AG04450 (cell line): ENCODE measurements at regions of chr6 and their contacts with region 1.

Region 1: GRCh38 chr6:13391537-13391936 is 63.2 kb upstream of the TBC1D7 start:
- DNase-seq: no peak
- H3K4me3 ChIP-seq: no peak overlapping the region
- H3K27ac ChIP-seq: no peak overlapping the region
- H3K27me3 ChIP-seq: no peaks in the 10 kb centered on the region
- CTCF ChIP-seq: no peak

Region 2: GRCh38 chr6:13079096-13079723 is 312.3 kb before region 1 on chr6:
- CTCF ChIA-PET with region 1: no interaction called
- POLR2A ChIA-PET with region 1: no interaction called
- DNase-seq: no peak
- H3K4me3 ChIP-seq: no peak overlapping the region
- H3K27ac ChIP-seq: no peak overlapping the region
- H3K27me3 ChIP-seq: no peaks in the 10 kb centered on the region
- CTCF ChIP-seq: no peak

Region 3: DNA sequence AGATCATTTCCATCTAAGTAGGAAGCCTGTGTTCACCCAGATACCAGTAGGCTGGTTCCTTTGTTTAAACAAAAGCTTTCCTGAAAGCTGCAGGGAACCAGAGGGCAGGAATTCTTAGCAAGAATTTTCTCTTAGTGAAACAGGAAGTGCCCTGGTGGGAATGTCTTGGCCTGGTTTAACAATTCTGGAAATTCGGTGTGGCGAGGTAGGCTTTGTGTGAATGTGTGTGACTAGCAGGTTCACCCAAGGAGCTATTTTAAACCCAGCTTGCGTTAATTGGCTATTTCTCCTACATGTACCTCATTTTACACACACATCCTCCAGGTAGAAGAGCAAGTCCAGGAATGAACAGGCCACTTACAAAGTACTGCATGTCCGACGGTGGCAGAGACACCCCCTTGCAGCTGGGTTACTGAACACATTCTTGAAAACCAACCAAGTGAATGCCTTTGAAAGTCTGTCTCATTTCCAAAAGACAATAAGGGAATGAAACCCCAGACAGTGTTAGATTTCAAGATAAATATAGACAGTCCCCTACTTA is 31.2 kb after region 1 on chr6:
- CTCF ChIA-PET with region 1: interaction called, 11 read pairs
- POLR2A ChIA-PET with region 1: no interaction called
- DNase-seq: no peak
- H3K4me3 ChIP-seq: no peak overlapping the region
- H3K27ac ChIP-seq: peak overlapping the region; percentile 34
- H3K27me3 ChIP-seq: no peaks in the 10 kb centered on the region
- CTCF ChIP-seq: no peak

Region 4: GRCh38 chr6:13433709-13434121 is 42.2 kb after region 1 on chr6:
- CTCF ChIA-PET with region 1: no interaction called
- POLR2A ChIA-PET with region 1: no interaction called
- DNase-seq: no peak
- H3K4me3 ChIP-seq: no peak overlapping the region
- H3K27ac ChIP-seq: no peak overlapping the region
- H3K27me3 ChIP-seq: no peaks in the 10 kb centered on the region
- CTCF ChIP-seq: no peak

Region 5: GRCh38 chr6:13668291-13668928 is 276.9 kb after region 1 on chr6:
- CTCF ChIA-PET with region 1: no interaction called
- POLR2A ChIA-PET with region 1: no interaction called
- DNase-seq: no peak
- H3K4me3 ChIP-seq: no peak overlapping the region
- H3K27ac ChIP-seq: no peak overlapping the region
- H3K27me3 ChIP-seq: no peaks in the 10 kb centered on the region
- CTCF ChIP-seq: no peak